IMR-90 (cell line): ENCODE measurements at regions of chr15 and their contacts with region 1.

Region 1: GRCh38 chr15:79431636-79432344 is at the start of gene MINAR1:
- DNase-seq: peak; percentile 56
- ATAC-seq: peak; percentile 86
- H3K4me3 ChIP-seq: peak within 1 kb of the TSS; percentile 65
- H3K27ac ChIP-seq: no peak within 1 kb of the TSS
- H3K4me1 ChIP-seq: no peaks in the 10 kb centered on the region
- H3K27me3 ChIP-seq: peaks cover 42% of the 10 kb centered on the region
- CTCF ChIP-seq: peak; percentile 45
- POLR2A ChIP-seq: no peak
- RAD21 ChIP-seq: peak; percentile 47
- total RNA-seq, gene MINAR1: 1.4 and 1.6 TPM in 2 replicates

Region 2: GRCh38 chr15:79479616-79480015 is 47.8 kb after region 1 on chr15:
- CTCF ChIA-PET with region 1: no interaction called
- POLR2A ChIA-PET with region 1: no interaction called
- dilution Hi-C with region 1: no loop called
- in situ Hi-C with region 1: no loop called
- intact Hi-C with region 1: loop called (anchors 5 kb)
- DNase-seq: no peak
- ATAC-seq: no peak
- H3K4me3 ChIP-seq: no peak overlapping the region
- H3K27ac ChIP-seq: no peak overlapping the region
- H3K4me1 ChIP-seq: no peaks in the 10 kb centered on the region
- H3K27me3 ChIP-seq: peaks cover 3% of the 10 kb centered on the region
- CTCF ChIP-seq: no peak
- POLR2A ChIP-seq: no peak
- RAD21 ChIP-seq: no peak

Region 3: GRCh38 chr15:79523266-79523665 is 91.5 kb after region 1 on chr15:
- CTCF ChIA-PET with region 1: no interaction called
- POLR2A ChIA-PET with region 1: no interaction called
- dilution Hi-C with region 1: no loop called
- in situ Hi-C with region 1: no loop called
- intact Hi-C with region 1: no loop called
- DNase-seq: no peak
- ATAC-seq: no peak
- H3K4me3 ChIP-seq: no peak overlapping the region
- H3K27ac ChIP-seq: no peak overlapping the region
- H3K4me1 ChIP-seq: no peaks in the 10 kb centered on the region
- H3K27me3 ChIP-seq: peaks cover 6% of the 10 kb centered on the region
- CTCF ChIP-seq: no peak
- POLR2A ChIP-seq: no peak
- RAD21 ChIP-seq: no peak